A549 (cell line): ENCODE measurements at regions of chr15 and their contacts with region 1.

Region 1: GRCh38 chr15:69394556-69395282 is 19.4 kb upstream of the KIF23 start:
- DNase-seq: peak; percentile 74 to 93
- ATAC-seq: peak; percentile 81 to 93
- H3K4me3 ChIP-seq: no peak overlapping the region
- H3K27ac ChIP-seq: peak overlapping the region; percentile 24 to 66; a peak in 5 of 6 replicates
- H3K4me1 ChIP-seq: peaks cover 26% of the 10 kb centered on the region
- CTCF ChIP-seq: peak; percentile 90
- EP300 ChIP-seq: no peak
- POLR2A ChIP-seq: no peak
- RAD21 ChIP-seq: peak; percentile 92 to 94

Region 2: GRCh38 chr15:69039516-69040225 is 355.0 kb before region 1 on chr15:
- CTCF ChIA-PET with region 1: interaction called, 28 read pairs
- POLR2A ChIA-PET with region 1: no interaction called
- DNase-seq: no peak
- ATAC-seq: no peak
- H3K4me3 ChIP-seq: no peak overlapping the region
- H3K27ac ChIP-seq: no peak overlapping the region
- H3K4me1 ChIP-seq: peaks cover 11% of the 10 kb centered on the region
- CTCF ChIP-seq: no peak
- EP300 ChIP-seq: no peak
- POLR2A ChIP-seq: no peak
- RAD21 ChIP-seq: no peak

Region 3: DNA sequence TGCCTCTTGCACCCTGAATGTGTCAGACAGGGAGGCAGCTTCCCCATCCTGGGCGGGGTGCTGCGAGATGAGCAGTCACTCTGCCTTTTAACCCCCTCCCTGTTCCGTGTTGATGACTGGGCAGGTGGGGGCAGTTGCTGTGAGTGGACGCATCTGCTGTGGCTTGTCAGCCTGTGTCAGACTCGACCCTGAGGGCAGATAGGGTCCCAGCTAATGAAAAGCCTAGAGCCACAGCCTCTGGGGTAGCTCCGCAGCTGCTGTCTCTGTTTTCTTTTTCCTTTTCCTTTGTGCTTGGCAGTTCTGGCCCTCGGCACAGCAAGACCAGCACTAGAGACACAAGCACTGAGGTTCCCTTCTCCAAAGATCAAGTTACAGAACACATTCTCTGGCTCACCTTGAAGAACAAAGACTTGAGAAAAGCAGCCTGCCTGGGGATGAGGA is 277.3 kb before region 1 on chr15:
- CTCF ChIA-PET with region 1: interaction called, 10 read pairs
- POLR2A ChIA-PET with region 1: no interaction called
- DNase-seq: no peak
- ATAC-seq: no peak
- H3K4me3 ChIP-seq: no peak overlapping the region
- H3K27ac ChIP-seq: no peak overlapping the region
- H3K4me1 ChIP-seq: no peaks in the 10 kb centered on the region
- CTCF ChIP-seq: no peak
- EP300 ChIP-seq: no peak
- POLR2A ChIP-seq: no peak
- RAD21 ChIP-seq: no peak

Region 4: DNA sequence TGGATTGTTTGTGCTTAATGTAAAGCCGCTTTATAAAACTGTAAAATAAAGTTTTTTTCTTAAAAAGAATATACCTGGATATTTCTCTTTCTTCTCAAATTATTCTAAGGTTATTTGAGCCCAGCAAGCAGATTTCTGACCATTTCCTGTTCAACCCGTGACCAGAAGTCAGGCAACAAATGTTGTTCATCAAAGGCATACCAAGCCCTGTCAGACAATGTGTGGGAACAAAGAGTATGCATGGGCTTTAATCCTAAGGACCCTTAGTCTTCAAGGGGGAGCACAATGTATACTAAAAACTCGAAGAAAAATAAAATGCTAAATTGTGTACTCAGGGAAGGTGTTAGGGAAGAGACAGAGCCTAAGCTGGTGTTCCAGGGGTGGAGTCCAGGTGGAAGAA is 122.6 kb before region 1 on chr15:
- CTCF ChIA-PET with region 1: interaction called, 35 read pairs
- POLR2A ChIA-PET with region 1: no interaction called
- DNase-seq: no peak
- ATAC-seq: no peak
- H3K4me3 ChIP-seq: no peak overlapping the region
- H3K27ac ChIP-seq: no peak overlapping the region
- H3K4me1 ChIP-seq: peaks cover 3% of the 10 kb centered on the region; the same call in 1 of the 3 replicates
- CTCF ChIP-seq: no peak
- EP300 ChIP-seq: no peak
- POLR2A ChIP-seq: no peak
- RAD21 ChIP-seq: no peak

Region 5: DNA sequence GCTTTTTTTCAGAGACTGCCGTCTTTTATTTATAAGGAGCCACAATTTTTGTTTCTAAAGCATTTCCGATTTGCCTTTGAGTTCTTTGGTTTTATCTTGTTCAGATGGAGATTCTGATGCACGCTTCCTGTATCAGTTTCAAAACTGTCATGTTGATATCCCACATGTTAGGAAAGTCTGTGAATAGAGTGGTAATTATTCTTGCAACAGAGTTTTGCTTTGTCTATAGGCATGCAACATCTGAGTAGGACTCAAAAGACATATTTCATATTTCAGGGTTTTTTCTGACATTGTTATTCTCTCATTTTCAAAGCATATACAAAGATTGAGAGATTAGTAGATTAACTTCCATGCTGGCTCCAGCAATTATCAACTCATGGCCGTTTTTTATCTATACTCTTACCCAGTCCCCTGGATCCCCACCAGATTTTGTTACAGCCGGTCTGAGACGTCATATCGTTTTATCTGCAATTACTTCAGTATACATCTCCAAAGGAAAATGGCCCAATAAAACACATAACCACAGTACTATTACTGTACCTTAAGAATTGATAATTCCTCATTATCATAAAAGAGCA is 73.7 kb before region 1 on chr15:
- CTCF ChIA-PET with region 1: interaction called, 22 read pairs
- POLR2A ChIA-PET with region 1: no interaction called
- DNase-seq: no peak
- ATAC-seq: no peak
- H3K4me3 ChIP-seq: no peak overlapping the region
- H3K27ac ChIP-seq: no peak overlapping the region
- H3K4me1 ChIP-seq: peaks cover 31% of the 10 kb centered on the region
- CTCF ChIP-seq: no peak
- EP300 ChIP-seq: no peak
- POLR2A ChIP-seq: no peak
- RAD21 ChIP-seq: no peak

Region 6: DNA sequence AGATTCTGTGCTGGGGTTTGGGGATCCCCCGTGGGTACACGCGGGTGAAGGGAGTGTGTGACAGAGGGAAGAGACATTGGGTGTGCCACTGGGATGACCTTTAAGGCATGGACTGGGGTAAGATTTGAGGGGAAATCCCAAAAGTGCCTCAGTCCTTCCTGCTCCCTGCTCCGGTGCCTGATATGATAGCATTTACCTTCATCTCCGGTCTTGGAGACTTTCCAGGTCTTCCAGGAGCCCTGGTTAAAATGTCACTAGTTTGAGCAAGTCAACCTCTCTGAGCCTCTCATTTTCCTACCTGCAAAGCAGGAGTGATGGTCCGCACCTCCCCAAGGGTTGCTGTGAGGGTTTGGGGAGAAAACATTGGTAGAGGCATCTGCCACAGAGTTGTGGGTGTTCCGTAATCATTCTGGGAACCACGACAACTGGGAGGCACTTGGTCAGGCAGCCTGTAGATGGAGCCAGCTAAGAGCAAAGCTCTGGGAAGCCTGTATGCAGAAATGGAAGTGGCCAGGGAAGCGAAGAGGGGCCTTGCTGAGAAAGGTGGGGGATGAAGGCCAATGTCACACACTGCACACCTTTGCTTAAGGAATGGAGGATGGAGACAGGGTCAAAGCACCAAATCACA is 14.5 kb before region 1 on chr15:
- CTCF ChIA-PET with region 1: interaction called, 83 read pairs
- POLR2A ChIA-PET with region 1: no interaction called
- DNase-seq: peak in 1 of 2 experiments; percentile 41
- ATAC-seq: peak; percentile 52 to 83; a peak in 4 of 6 replicates
- H3K4me3 ChIP-seq: no peak overlapping the region
- H3K27ac ChIP-seq: no peak overlapping the region
- H3K4me1 ChIP-seq: peaks cover 9% of the 10 kb centered on the region
- CTCF ChIP-seq: peak; percentile 17; the same call in 1 of the 3 replicates
- EP300 ChIP-seq: no peak
- POLR2A ChIP-seq: no peak
- RAD21 ChIP-seq: no peak; a peak in 1 of 5 replicates

Region 7: DNA sequence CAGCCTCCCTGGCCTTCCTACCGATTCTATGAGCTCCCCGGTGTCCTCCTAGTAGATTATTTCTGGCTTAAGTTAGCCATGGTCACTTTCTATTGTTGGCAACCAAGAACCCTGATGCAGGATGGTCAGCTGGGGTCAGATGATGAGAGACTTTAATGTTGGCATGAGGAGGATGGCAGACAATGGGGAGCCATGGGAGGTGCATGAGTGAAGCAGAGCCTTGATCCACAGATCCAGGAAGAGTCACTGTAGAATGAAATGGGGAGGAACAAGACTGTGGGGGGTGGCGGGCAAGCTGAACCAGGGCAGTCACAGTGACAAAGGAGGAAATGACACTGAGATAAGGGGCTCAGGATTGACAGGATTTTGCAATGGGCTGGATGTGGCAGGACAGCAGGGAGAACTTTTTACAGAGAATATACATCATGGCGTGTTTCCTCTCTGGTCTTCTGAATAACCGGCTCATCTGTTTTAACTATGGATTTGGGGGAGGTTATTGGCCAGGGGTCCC is 118.8 kb after region 1 on chr15:
- CTCF ChIA-PET with region 1: no interaction called
- POLR2A ChIA-PET with region 1: no interaction called
- DNase-seq: no peak
- ATAC-seq: no peak
- H3K4me3 ChIP-seq: no peak overlapping the region
- H3K27ac ChIP-seq: no peak overlapping the region
- H3K4me1 ChIP-seq: peaks cover 10% of the 10 kb centered on the region
- CTCF ChIP-seq: no peak
- EP300 ChIP-seq: no peak
- POLR2A ChIP-seq: no peak
- RAD21 ChIP-seq: no peak